PC-3 (cell line): ENCODE measurements at regions of chr11 and their contacts with region 1.

Region 1: DNA sequence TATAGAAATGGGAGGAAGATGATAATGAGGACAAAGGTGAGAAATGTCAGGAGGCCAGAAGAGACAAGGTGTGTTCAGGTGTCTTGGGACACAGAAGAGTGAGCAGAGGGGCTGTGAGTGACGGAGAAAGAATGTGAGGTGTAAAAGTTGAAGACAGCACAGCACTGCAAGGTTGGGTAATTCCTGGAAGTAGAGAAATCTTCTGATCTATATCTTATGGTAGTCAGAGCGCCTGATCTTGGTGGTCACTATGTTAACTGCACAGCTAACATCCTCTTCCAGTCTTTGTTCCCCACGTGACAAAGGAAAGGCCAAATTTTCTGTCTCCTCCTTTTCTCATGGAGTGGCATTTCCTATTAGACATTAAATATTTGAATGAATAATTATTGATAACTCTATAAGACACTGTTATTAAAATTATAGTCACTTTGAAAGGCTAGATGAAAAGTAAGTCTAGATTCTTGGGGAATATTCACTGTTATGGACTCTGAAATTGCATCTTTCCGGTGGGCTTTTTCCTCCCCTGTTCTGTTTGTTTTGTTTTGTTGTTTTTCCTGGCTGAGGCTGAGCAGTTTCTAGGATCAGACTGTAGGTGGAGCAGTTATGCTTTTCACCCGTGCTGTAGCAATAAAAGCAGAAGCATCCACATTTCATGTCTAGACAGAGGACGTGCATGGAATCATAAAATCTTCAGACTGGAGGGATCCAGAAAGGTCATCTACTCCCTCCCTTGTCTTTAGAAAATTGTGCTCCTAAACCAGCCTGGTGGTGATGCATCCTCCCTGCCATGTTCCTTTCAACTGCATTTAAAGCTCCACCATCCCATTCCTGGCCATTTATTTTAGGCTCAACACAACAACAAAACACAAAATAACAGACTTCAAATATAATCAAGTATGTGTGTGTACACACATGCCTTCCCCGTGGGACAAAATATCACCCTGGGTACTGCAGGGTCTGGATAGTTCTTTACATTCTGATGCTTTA is 26.6 kb downstream of the SC5D start:
- DNase-seq: peak; percentile 74
- ATAC-seq: peak; percentile 66
- H3K4me3 ChIP-seq: no peak overlapping the region
- H3K27ac ChIP-seq: no peak overlapping the region
- H3K4me1 ChIP-seq: no peaks in the 10 kb centered on the region
- H3K27me3 ChIP-seq: no peaks in the 10 kb centered on the region
- CTCF ChIP-seq: peak; percentile 96

Region 2: DNA sequence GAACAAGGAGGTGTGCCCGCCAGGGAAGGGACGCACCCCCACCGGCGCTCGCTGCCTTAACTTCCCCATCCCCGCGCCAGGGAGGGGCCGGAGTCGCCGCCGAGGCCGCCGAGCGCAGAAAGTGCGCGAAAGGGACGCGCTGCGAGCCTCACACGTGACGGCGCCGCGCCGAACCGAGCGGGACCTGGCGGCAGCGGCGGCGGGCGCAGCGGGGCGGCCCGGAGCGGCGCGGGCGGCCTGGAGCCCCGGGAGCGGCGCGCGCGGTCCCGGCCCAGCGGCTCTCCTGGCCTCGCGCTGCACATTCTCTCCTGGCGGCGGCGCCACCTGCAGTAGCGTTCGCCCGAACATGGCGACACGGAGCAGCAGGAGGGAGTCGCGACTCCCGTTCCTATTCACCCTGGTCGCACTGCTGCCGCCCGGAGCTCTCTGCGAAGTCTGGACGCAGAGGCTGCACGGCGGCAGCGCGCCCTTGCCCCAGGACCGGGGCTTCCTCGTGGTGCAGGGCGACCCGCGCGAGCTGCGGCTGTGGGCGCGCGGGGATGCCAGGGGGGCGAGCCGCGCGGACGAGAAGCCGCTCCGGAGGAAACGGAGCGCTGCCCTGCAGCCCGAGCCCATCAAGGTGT is 133.0 kb after region 1 on chr11 and contains the start of gene SORL1:
- CTCF ChIA-PET with region 1: no interaction called
- POLR2A ChIA-PET with region 1: no interaction called
- intact Hi-C with region 1: loop called (anchors 1 kb)
- DNase-seq: peak; percentile 90
- ATAC-seq: peak; percentile 82
- H3K4me3 ChIP-seq: peak within 1 kb of the TSS; percentile 89
- H3K27ac ChIP-seq: peak within 1 kb of the TSS; percentile 65
- H3K4me1 ChIP-seq: peaks cover 39% of the 10 kb centered on the region
- H3K27me3 ChIP-seq: no peaks in the 10 kb centered on the region
- CTCF ChIP-seq: peak; percentile 68
- total RNA-seq, gene SORL1: 53.7 and 74.5 TPM in 2 replicates

Region 3: GRCh38 chr11:121534131-121535093 is 215.3 kb after region 1 on chr11:
- CTCF ChIA-PET with region 1: no interaction called
- POLR2A ChIA-PET with region 1: no interaction called
- intact Hi-C with region 1: loop called (anchors 2 kb)
- DNase-seq: peak; percentile 62
- ATAC-seq: peak; percentile 72
- H3K4me3 ChIP-seq: no peak overlapping the region
- H3K27ac ChIP-seq: peak overlapping the region; percentile 15; the same call in 1 of the 2 replicates
- H3K4me1 ChIP-seq: peaks cover 21% of the 10 kb centered on the region
- H3K27me3 ChIP-seq: no peaks in the 10 kb centered on the region
- CTCF ChIP-seq: peak; percentile 52; the same call in 1 of the 2 replicates

Region 4: DNA sequence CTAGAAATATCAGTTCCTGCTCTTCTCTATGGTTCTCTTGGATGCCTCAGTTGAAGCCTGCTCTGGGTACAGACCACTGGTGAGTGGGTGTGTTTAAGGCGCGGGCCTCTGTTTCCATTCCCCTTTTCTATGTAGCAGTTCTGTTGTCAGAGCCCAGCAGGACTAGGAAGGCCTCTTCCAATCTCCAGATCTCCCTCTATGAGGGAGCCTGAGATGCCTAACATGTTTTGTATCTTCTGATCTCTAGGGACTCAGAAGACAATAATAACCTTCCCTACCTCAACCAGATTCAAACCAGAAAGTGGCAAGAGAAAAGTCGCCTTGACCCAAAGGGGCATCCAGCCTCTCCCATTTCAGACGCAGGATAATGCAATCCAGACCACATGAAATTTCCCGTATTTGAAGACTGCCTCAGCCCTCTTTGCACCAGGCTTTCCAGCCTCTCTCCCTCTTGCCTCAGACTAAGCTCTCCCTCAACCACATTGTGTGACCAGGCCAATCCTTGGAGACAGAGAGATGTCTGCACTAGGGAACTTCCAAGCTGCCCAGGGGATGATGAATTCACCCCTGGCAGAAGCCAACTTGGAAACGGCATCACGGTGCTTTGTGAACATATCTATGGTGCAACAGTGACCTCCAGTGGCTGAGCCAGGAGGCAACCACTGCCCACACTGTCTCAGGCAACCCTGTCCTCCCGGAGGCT is 1186.3 kb after region 1 on chr11:
- CTCF ChIA-PET with region 1: no interaction called
- POLR2A ChIA-PET with region 1: no interaction called
- intact Hi-C with region 1: loop called (anchors 5 kb)
- DNase-seq: peak; percentile 92
- ATAC-seq: peak; percentile 100
- H3K4me3 ChIP-seq: no peak overlapping the region
- H3K27ac ChIP-seq: no peak overlapping the region
- H3K4me1 ChIP-seq: no peaks in the 10 kb centered on the region
- H3K27me3 ChIP-seq: peaks cover 81% of the 10 kb centered on the region
- CTCF ChIP-seq: peak; percentile 95